Heart left ventricle (tissue), 16 donors: ENCODE measurements at regions of chr15 and their contacts with region 1.

Region 1: GRCh38 chr15:27165583-27165982 is 194.6 kb downstream of the GABRG3 start:
- DNase-seq: no peak
- ATAC-seq: no peak
- H3K4me3 ChIP-seq: no peak overlapping the region
- H3K27ac ChIP-seq: no peak overlapping the region
- H3K4me1 ChIP-seq: no peaks in the 10 kb centered on the region
- H3K27me3 ChIP-seq: peaks cover 0 to 3% (median 0%) of the 10 kb centered on the region in 9 donors
- CTCF ChIP-seq: no peak
- POLR2A ChIP-seq: no peak

Region 2: GRCh38 chr15:26580943-26581342 is 584.6 kb before region 1 on chr15:
- intact Hi-C with region 1: no loop called
- DNase-seq: no peak
- ATAC-seq: no peak
- H3K4me3 ChIP-seq: no peak overlapping the region
- H3K27ac ChIP-seq: no peak overlapping the region
- H3K4me1 ChIP-seq: no peaks in the 10 kb centered on the region
- H3K27me3 ChIP-seq: no peaks in the 10 kb centered on the region
- CTCF ChIP-seq: no peak
- POLR2A ChIP-seq: no peak

Region 3: GRCh38 chr15:27101982-27102381 is 63.6 kb before region 1 on chr15:
- intact Hi-C with region 1: loop called in 1 of 10 experiments (anchors 10 kb)
- DNase-seq: no peak
- ATAC-seq: no peak
- H3K4me3 ChIP-seq: no peak overlapping the region
- H3K27ac ChIP-seq: no peak overlapping the region
- H3K4me1 ChIP-seq: no peaks in the 10 kb centered on the region
- H3K27me3 ChIP-seq: no peaks in the 10 kb centered on the region
- CTCF ChIP-seq: no peak
- POLR2A ChIP-seq: no peak

Region 4: GRCh38 chr15:27119695-27120266 is 45.8 kb before region 1 on chr15:
- intact Hi-C with region 1: no loop called
- DNase-seq: no peak
- ATAC-seq: no peak
- H3K4me3 ChIP-seq: no peak overlapping the region
- H3K27ac ChIP-seq: no peak overlapping the region
- H3K4me1 ChIP-seq: no peaks in the 10 kb centered on the region
- H3K27me3 ChIP-seq: no peaks in the 10 kb centered on the region
- CTCF ChIP-seq: no peak
- POLR2A ChIP-seq: no peak

Region 5: DNA sequence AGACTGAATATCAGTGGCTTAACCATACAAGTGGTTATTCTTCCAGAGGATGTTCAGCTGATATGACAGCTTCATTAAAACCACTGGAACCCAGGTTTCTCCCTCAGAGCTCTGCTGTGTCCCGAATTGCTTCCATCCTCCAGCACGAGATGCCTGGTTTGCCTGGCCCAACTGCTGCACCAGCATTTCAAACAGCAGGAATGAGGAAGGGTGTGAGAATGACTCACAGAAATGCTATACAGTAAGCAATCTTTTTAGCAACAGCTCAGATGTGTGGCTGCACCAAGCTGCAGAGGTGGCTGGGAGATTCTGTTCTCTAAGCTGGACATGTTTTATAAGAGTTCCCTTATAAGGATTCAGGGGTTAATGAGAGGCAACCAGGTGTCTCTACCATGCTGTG is 76.4 kb after region 1 on chr15:
- intact Hi-C with region 1: no loop called
- DNase-seq: no peak
- ATAC-seq: no peak
- H3K4me3 ChIP-seq: no peak overlapping the region
- H3K27ac ChIP-seq: no peak overlapping the region
- H3K4me1 ChIP-seq: peaks cover 0 to 5% (median 0%) of the 10 kb centered on the region in 12 donors
- H3K27me3 ChIP-seq: peaks cover 0 to 3% (median 0%) of the 10 kb centered on the region in 9 donors
- CTCF ChIP-seq: no peak
- POLR2A ChIP-seq: no peak